ENCODE measurements at regions of chr11 and their contacts with region 1.

Region 1: DNA sequence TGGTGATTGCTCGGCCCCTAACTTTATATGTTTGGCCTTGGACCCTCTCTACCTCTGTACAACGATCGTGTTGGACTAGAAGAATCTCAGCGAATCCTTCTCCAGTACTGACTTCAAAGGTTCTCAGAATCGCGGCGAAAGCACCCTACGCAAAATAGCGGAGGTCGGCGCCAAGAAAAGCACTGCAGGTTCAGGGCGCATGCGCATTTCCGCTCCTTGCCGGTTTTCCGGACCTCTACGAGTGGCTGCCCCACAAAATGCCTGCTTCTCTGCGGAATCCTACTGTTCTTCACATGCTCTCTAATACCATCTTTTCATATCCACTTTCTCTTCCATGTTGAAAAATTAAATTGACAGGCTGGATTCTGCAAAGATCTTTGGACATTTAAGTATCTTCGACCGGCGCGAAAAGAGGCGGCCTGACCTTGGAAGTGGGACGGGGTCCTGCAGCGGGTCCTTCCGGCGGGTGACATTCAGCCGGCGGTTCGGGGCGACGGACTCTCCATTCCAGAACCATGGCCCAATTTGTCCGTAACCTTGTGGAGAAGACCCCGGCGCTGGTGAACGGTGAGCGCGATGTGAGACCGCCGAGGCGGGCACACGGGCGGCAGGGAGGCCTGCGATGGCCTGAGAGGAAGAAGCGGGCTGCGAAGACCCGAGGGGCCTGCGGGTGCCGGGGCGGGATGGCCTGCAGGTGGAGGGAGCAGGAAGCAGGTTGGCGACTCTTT is at the start of gene ATP5MG:
- DNase-seq: peak; percentile 81 to 86
- ATAC-seq: peak; percentile 88 to 89
- H3K4me3 ChIP-seq: peak within 1 kb of the TSS; percentile 77 to 97 (median 86)
- H3K27ac ChIP-seq: peak within 1 kb of the TSS; percentile 81 to 90 (median 88)
- H3K4me1 ChIP-seq: peaks cover 37 to 39% of the 10 kb centered on the region in 2 donors
- H3K27me3 ChIP-seq: no peaks in the 10 kb centered on the region
- CTCF ChIP-seq: peak in 4 of 5 experiments; percentile 8 to 27 (median 22)
- POLR2A ChIP-seq: peak; percentile 74 to 79
- total RNA-seq, gene ATP5MG: 46.9 to 90.6 (median 55.4) TPM

Region 2: DNA sequence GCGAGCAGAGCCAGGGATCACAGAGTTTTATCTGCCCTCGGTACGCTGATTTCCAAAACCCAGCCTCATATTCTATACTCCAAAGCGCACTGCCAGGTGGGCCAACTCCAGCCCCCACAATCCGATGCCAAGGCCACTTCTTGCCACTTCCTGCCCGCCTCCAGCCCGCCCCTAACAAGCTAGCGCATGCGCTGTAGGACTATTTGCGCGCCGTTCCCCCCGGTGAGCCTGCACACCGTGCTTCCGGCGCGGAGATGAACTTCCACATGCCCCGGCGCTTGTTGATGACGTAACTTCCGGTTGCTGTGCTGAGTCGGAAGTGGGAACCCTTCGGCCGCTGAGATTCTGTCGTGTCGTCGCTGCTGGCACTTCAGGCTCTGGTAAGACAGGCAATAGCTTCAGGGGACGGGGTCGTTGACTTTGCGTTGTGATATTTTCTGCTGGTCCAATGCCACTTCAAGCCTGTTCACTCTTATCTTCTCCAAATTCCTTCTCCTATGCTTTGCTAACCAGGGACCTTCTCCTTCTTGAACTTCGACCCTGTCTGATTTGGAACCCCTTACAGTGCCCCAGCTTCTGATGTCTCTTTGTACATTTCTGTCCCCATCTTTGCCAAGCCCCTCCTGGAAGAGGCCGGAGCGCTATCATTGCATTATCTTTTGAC is 41.9 kb before region 1 on chr11 and contains the start of gene UBE4A:
- in situ Hi-C with region 1: no loop called
- intact Hi-C with region 1: loop called (anchors 2 kb)
- DNase-seq: peak; percentile 89 to 92
- ATAC-seq: peak; percentile 84 to 97
- H3K4me3 ChIP-seq: peak within 1 kb of the TSS; percentile 72 to 88 (median 76)
- H3K27ac ChIP-seq: peak within 1 kb of the TSS; percentile 70 to 83 (median 76)
- H3K4me1 ChIP-seq: peaks cover 25 to 28% of the 10 kb centered on the region in 2 donors
- H3K27me3 ChIP-seq: no peaks in the 10 kb centered on the region
- CTCF ChIP-seq: no peak
- POLR2A ChIP-seq: peak; percentile 54 to 60
- total RNA-seq, gene UBE4A: 36.6 to 73.9 (median 41.7) TPM

Region 3: GRCh38 chr11:118435893-118436624 is 34.7 kb after region 1 on chr11 and contains the start of gene KMT2A:
- in situ Hi-C with region 1: no loop called
- intact Hi-C with region 1: loop called (anchors 1 kb)
- DNase-seq: peak; percentile 92 to 94
- ATAC-seq: peak; percentile 75 to 81
- H3K4me3 ChIP-seq: peak within 1 kb of the TSS; percentile 92 to 97 (median 96)
- H3K27ac ChIP-seq: peak within 1 kb of the TSS; percentile 86 to 92 (median 90)
- H3K4me1 ChIP-seq: peaks cover 41 to 49% of the 10 kb centered on the region in 2 donors
- H3K27me3 ChIP-seq: no peaks in the 10 kb centered on the region
- CTCF ChIP-seq: peak in 4 of 5 experiments; percentile 17 to 100 (median 100)
- POLR2A ChIP-seq: peak; percentile 30 to 46
- total RNA-seq, gene KMT2A: 24.3 to 55.6 (median 27.9) TPM

Region 4: DNA sequence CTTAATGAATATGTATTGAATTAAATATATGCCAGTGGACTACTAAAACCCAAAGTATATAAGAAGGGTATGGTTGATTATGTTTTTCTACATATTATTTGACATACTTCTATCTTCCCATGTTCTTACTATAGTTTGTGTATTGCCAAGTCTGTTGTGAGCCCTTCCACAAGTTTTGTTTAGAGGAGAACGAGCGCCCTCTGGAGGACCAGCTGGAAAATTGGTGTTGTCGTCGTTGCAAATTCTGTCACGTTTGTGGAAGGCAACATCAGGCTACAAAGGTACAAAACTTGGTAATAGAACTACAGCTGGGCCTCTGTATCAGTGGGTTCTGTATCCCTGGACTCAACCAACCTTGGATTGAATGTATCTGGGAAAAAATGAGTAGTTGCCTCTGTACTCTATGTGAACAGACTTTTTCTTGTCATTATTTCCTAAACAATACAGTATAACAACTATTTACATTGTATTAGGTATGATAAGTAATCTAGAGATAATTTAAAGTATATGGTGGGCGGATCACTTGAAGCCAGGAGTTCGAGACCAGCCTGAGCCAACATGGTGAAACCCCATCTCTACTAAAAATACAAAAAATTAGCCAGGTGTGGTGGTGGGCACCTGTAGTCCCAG is 87.3 kb after region 1 on chr11:
- in situ Hi-C with region 1: loop called in 3 of 4 experiments (anchors 5 to 25 kb)
- intact Hi-C with region 1: loop called (anchors 1 kb)
- DNase-seq: peak; percentile 27 to 43
- ATAC-seq: peak; percentile 65 to 79
- H3K4me3 ChIP-seq: no peak overlapping the region
- H3K27ac ChIP-seq: peak overlapping the region in 1 of 4 donors; percentile 25
- H3K4me1 ChIP-seq: peaks cover 0 to under 1% of the 10 kb centered on the region in 2 donors
- H3K27me3 ChIP-seq: no peaks in the 10 kb centered on the region
- CTCF ChIP-seq: peak; percentile 69 to 81 (median 78)
- POLR2A ChIP-seq: no peak

Region 5: DNA sequence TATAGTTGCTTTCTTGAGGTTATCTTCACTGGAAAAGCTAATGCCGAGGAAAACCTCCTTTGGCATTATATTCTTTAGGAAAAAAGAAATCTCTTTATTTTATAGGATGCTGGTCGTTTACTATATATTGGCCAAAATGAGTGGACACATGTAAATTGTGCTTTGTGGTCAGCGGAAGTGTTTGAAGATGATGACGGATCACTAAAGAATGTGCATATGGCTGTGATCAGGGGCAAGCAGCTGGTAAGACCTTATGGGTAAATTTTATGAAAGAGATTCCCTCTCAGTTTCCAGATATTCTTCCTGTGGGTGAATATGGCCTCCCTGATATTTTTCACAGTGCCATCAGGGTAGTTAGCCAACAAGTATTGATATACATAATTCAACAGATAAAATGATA is 96.5 kb after region 1 on chr11:
- in situ Hi-C with region 1: loop called in 3 of 4 experiments (anchors 5 to 25 kb)
- intact Hi-C with region 1: no loop called
- DNase-seq: no peak
- ATAC-seq: no peak
- H3K4me3 ChIP-seq: no peak overlapping the region
- H3K27ac ChIP-seq: no peak overlapping the region
- H3K4me1 ChIP-seq: peaks cover 0 to 6% of the 10 kb centered on the region in 2 donors
- H3K27me3 ChIP-seq: no peaks in the 10 kb centered on the region
- CTCF ChIP-seq: no peak
- POLR2A ChIP-seq: no peak

Region 6: GRCh38 chr11:118565051-118565450 is 163.7 kb after region 1 on chr11:
- in situ Hi-C with region 1: no loop called
- intact Hi-C with region 1: loop called (anchors 5 kb)
- DNase-seq: no peak
- ATAC-seq: no peak
- H3K4me3 ChIP-seq: peak overlapping the region; percentile 72 to 86 (median 78)
- H3K27ac ChIP-seq: peak overlapping the region; percentile 38 to 85 (median 82)
- H3K4me1 ChIP-seq: peaks cover 7% of the 10 kb centered on the region in 2 donors
- H3K27me3 ChIP-seq: no peaks in the 10 kb centered on the region
- CTCF ChIP-seq: no peak
- POLR2A ChIP-seq: no peak

Region 7: DNA sequence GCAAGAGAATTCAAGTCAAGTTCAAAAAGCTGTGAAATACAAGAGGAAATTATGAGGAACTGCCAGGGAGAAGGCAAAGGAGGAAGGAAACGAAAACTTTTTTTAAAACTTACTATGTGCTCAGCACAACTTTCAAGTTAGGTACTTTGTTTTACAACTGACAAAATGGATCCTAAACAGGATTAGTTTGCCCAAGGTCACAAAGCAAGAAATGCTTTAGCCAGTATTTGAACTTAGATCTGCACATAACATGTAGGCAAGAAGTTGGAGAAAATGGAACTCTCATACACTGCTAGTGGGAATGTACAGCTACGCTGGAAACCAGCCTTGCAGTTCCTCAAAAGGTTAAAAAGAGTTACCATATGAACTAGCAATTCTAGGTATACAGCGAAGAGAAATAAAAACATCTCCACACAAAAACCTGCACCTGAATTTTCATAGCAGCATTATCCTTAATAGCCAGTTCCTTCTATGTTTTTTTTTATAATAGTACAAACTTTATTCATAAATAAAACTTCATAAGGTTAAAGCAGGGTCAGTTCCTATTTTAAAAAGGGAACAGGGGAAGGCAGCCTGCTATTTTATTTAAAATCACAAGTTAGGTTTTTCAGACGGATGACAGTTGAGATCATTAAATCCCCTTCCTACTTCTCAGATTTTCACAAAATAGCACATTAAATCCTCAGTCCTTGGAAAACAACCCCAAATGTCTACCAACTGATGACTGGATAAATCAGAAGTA is 370.4 kb after region 1 on chr11:
- in situ Hi-C with region 1: loop called in 1 of 4 experiments (anchors 25 kb)
- intact Hi-C with region 1: no loop called
- DNase-seq: no peak
- ATAC-seq: no peak
- H3K4me3 ChIP-seq: no peak overlapping the region
- H3K27ac ChIP-seq: peak overlapping the region; percentile 3 to 47 (median 32)
- H3K4me1 ChIP-seq: peaks cover 60 to 81% of the 10 kb centered on the region in 2 donors
- H3K27me3 ChIP-seq: no peaks in the 10 kb centered on the region
- CTCF ChIP-seq: no peak
- POLR2A ChIP-seq: no peak

Measured in gastrocnemius medialis (tissue), 4 donors.